ENCODE measurements at regions of chr21 and their contacts with region 1.

Region 1: DNA sequence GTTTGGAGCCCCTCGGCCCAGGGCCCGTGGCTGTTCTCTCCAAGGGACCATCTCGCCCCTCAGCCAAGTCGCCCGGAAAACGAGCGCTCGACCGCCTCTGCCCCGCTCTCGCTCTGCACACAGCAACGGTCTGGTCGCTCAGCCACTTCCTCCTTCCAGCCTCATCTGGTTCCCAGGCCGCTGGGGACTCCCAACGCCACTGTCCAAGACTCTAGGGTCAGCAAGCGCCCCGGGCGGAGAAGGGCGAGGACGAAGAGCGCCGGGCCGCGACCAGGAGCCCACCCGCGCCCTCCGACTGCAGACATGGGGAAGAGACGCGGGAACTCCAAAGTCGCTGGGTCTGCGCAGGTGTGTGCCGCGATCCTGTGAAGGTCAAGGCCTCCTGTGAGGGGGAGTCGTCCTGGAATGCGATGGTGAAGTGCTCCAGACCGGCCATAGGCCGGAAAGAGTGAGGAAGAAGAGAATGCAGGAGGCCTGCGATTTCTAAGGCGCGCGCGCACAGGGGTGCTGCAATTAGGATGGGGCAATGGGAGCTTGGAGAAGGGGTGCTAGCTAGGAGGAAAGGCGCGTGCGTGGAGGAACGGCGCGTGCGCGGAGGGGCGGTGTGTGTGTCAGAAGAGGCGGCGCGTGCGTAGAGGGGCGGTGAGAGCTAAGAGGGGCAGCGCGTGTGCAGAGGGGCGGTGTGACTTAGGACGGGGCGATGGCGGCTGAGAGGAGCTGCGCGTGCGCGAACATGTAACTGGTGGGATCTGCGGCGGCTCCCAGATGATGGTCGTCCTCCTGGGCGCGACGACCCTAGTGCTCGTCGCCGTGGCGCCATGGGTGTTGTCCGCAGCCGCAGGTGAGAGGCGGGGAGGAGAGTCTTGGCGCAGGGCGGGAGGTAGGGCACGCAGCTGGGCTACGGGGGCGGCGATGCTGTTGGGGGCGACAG is at the start of gene IFNAR1:
- DNase-seq: peak; percentile 98

Region 2: DNA sequence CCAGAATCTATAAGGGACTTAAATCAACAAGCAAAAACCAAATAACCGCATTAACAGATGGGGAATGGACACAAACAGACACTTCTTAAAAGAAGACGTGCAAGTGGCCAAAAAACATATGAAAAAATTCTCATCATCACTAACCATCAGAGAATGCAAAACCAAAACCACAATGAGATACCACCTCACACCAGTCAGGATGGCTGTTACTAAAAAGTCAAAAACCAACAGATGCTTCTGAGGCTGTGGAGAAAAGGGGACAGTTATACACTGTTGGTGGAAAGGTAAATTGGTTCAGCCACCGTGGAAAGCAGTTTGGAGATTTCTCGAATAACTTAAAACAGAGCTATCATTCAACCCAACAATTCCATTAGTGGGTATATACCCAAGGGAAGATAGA is 423.7 kb before region 1 on chr21:
- CTCF ChIA-PET with region 1: no interaction called
- POLR2A ChIA-PET with region 1: no interaction called
- DNase-seq: no peak

Region 3: DNA sequence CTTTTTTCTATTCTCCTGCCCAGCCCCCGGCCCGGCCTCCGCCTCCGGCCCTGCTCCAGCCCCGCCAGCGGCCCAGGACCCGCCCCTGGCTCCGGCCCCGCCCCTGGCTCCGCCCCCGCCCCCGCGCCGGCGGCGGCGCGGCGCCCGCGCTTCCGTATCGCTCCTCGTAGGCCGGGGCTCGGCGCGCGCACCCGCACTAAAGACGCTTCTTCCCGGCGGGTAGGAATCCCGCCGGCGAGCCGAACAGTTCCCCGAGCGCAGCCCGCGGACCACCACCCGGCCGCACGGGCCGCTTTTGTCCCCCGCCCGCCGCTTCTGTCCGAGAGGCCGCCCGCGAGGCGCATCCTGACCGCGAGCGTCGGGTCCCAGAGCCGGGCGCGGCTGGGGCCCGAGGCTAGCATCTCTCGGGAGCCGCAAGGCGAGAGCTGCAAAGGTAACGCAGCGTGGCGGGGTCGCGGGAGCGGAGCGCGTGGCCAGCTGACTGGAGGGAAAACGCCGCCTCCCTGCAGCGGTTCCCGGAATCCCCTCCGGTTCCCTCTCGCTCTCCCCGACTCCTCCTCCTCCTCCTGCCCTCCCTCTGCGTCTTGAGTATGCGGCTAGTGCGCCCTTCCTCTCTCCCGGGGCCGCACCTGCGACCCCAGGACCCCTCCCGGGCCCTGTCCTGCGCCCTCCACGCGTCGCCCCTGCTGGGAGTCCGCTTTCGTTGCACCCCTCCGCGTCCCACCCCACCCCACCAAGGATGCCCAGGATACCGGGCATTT is 94.6 kb before region 1 on chr21 and contains the start of gene IFNAR2:
- CTCF ChIA-PET with region 1: no interaction called
- POLR2A ChIA-PET with region 1: interaction called, 13 read pairs
- DNase-seq: peak; percentile 97

Region 4: GRCh38 chr21:33308586-33309490 is 15.7 kb before region 1 on chr21:
- CTCF ChIA-PET with region 1: no interaction called
- POLR2A ChIA-PET with region 1: interaction called, 13 read pairs
- DNase-seq: no peak

Region 5: GRCh38 chr21:33314111-33314510 is 10.4 kb before region 1 on chr21:
- CTCF ChIA-PET with region 1: no interaction called
- POLR2A ChIA-PET with region 1: interaction called, 13 read pairs
- DNase-seq: no peak

Region 6: DNA sequence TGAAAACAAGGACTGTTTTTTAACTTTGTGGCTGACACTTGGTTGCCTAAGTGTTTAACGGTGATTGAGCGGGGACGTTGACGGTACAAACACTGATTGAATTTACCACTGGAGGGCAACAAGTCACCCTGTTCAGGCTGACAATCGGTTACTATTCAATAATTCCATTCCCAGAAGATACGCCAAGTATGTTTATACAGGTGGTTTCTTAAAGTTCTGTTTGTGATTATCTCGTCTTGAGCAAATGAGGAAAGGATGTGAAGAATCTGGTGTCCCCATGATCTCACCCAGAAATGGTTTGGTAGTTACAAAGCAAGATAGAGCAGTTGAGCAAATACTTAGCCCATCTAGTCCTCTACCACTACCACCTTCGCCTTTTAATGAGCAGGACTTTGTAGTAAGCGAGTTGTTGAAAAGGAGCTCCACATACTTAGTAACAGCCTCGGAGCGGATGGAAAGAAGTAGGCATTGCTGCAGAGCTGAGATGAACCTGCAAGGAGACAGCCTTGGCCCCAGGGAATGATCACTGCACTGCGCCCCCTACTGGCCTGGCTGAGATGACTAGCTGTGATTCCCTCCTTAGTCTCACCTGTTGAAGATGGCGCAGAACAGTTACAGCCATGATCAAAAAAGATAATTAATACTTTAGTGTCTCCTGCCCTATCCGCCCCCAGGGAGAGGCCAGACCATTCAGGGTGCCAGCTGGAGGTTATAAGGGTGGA is 36.5 kb after region 1 on chr21:
- CTCF ChIA-PET with region 1: interaction called, 7 read pairs
- POLR2A ChIA-PET with region 1: interaction called, 11 read pairs
- DNase-seq: peak; percentile 92

Measured in HEK293T (cell line).